ENCODE measurements at regions of chr6 and their contacts with region 1.

Region 1: GRCh38 chr6:111605100-111605751 is 452 bp downstream of the TRAF3IP2 start:
- DNase-seq: peak; percentile 84

Region 2: GRCh38 chr6:111552241-111552744 is 52.9 kb before region 1 on chr6:
- intact Hi-C with region 1: loop called (anchors 5 kb)
- DNase-seq: no peak

Region 3: DNA sequence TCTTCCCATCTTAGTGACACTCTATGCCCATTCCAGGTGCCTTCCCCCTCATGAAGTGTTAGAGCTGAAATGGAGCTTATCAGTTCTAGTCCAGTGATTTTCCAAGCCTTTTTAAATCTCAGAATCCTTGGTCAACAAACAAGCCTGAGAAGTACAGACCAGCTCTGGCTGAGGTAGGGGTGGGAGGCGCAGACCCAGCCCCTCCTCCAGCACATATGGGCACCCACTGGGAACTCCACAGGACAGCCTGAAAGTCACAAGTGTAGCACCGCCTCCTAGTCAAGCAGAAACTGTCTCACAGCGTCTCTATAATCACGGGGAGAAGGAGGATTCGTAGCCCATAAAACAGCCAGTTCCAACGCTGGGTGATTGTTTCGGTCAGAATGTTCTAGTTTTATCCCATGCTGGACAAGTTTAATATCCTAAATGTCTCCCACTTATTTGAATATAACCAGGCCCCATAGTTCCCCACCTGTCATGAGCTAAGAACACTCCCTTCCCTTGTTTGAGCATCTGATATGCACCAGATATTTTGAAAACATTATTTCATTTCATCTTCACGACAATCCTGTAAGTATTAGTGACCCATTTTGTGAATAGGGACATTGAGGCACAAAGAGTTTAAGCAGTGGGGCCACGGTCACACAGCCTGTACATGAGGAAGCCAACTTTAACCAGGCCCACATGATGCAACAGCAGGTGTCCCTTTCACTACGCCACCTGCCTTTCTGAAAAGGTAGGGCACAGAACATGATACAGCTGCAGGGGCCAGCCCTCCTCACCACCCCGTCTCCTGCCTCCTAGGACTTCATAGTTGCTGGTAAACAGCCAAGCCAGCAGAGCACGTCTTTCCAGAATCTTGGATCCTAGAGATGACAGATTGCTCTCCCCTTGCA is 39.7 kb before region 1 on chr6:
- intact Hi-C with region 1: loop called (anchors 5 kb)
- DNase-seq: no peak

Region 4: DNA sequence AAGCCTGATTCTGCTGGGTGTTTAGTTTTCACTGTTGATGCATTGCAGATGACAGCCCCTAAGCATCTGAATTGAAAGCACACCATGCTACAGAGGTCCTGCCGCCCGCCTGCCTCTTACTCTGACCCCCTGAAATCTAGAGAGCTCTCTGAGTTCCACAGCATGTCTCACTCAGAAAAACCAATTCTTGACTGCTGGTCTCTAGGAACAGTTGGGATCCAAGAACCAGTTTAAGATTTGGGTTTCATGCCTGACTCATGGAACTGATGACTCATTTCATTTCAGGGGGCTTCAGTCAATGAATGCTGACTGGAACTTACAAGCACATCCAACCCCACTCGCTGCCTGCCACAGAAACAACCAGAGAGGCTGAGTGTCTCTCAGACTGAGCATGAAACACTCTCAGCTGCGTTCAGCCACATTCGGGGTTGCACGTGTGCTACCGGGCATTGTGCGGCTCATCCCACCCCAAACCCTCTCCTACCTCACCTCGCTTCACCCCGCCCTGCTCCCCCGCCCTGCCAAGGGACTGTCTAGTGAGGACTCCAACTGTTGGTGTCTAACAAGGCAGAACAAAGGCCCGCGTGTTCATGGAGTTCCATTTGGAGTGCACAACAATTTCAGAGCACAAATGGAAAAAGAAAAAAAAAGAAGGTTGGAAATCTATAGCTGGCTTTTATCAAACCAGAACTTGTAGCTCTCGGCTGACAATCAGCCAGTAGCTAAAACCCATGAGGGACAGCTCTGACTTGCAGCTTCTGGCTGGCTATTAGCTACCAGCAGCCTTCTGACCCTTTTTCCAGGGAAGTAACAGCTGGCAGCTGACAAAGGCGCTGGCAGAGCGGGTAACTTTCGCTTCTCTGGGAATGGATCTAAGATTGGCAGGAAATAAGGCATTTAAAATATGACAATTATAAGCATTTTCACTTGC is 20.5 kb after region 1 on chr6:
- intact Hi-C with region 1: loop called (anchors 2 kb)
- DNase-seq: no peak

Region 5: GRCh38 chr6:111683749-111684267 is 78.6 kb after region 1 on chr6:
- intact Hi-C with region 1: loop called (anchors 5 kb)
- DNase-seq: no peak